Panc1 (cell line): ENCODE measurements at regions of chr6 and their contacts with region 1.

Region 1: GRCh38 chr6:34671801-34672656 is 24.5 kb downstream of the ILRUN start:
- DNase-seq: no peak
- ATAC-seq: peak; percentile 70; the same call in 1 of the 2 replicates
- H3K4me3 ChIP-seq: no peak overlapping the region
- H3K27ac ChIP-seq: no peak overlapping the region
- H3K4me1 ChIP-seq: peaks cover 3% of the 10 kb centered on the region; the same call in 1 of the 2 replicates
- H3K27me3 ChIP-seq: no peaks in the 10 kb centered on the region
- CTCF ChIP-seq: no peak

Region 2: DNA sequence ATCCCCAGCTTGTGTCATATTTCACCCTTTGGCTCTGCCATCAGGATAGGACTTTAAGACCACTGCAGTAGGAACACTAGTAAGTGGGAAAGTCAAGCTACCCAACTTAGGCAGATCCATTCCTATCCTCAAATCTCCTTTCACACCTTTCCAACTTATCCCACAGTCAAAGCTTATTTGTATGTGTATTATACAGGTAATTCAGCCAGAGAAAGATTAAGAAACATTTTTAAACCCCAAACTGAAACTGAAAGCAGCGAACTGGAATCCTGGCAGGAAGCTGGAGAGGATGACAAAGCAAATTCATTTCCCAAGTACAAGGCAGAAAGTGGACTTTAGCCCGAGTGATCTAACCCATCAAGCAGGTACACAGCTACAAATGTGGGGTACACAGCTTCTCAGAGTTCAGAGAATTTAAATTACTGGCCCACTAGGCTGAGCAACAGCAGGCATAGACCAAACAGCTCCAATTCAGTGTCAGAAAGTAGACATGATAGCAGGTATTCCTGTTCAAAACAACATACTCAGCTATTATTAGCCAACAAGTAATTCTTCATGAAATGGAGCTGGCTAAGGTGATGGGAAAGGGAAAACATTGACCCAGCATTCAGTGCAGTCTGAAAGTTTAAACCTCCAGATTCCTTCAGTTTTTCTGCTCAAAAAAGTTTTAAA is 14.6 kb before region 1 on chr6:
- CTCF ChIA-PET with region 1: no interaction called
- POLR2A ChIA-PET with region 1: interaction called, 10 read pairs
- in situ Hi-C with region 1: no loop called
- intact Hi-C with region 1: no loop called
- DNase-seq: peak; percentile 65
- ATAC-seq: peak; percentile 77
- H3K4me3 ChIP-seq: peak overlapping the region; percentile 29 to 61
- H3K27ac ChIP-seq: peak overlapping the region; percentile 93
- H3K4me1 ChIP-seq: peaks cover 30% of the 10 kb centered on the region
- H3K27me3 ChIP-seq: no peaks in the 10 kb centered on the region
- CTCF ChIP-seq: no peak

Region 3: GRCh38 chr6:34901930-34902329 is 229.9 kb after region 1 on chr6:
- CTCF ChIA-PET with region 1: no interaction called
- POLR2A ChIA-PET with region 1: no interaction called
- in situ Hi-C with region 1: no loop called
- intact Hi-C with region 1: no loop called
- DNase-seq: no peak
- ATAC-seq: no peak
- H3K4me3 ChIP-seq: no peak overlapping the region
- H3K27ac ChIP-seq: peak overlapping the region; percentile 41; the same call in 1 of the 2 replicates
- H3K4me1 ChIP-seq: peaks cover 6% of the 10 kb centered on the region; the same call in 1 of the 2 replicates
- H3K27me3 ChIP-seq: no peaks in the 10 kb centered on the region
- CTCF ChIP-seq: no peak